GM13977 (cell line): ENCODE measurements at regions of chr5 and their contacts with region 1.

Region 1: GRCh38 chr5:64612344-64612961 is 77.8 kb upstream of the SHISAL2B start:
- DNase-seq: peak; percentile 18
- CTCF ChIP-seq: peak; percentile 74

Region 2: DNA sequence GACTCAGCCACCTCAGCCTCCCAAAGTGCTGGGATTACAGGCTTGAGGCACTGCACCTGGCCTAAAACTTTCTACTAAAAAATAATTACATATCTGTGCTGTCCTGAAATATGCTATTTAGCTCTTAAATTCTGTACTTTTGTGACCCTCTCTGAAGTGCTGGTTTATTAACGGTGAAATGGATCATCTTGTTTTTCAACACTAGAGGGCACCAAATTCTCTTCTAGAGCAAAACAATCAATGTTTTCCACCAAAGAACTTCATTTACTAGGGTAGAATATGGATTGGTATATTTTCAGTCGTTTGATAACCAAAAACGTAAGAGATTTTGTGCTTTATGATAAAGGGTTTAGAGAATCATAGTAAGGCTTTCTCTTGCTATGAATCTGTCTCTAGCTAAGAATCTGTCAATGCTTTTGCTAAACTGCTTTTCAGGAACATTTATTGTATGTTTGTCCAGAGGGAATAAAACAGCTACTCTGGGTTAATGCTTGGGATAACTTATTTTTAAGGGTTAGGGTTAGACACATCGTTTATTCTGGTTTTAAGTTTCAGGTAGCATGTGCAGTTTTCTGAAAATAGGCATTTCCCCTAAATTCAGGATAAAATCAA is 383.2 kb before region 1 on chr5:
- in situ Hi-C with region 1: loop called (anchors 25 kb)
- DNase-seq: peak; percentile 74
- CTCF ChIP-seq: peak; percentile 61